HepG2 (cell line): ENCODE measurements at regions of chr2 and their contacts with region 1.

Region 1: DNA sequence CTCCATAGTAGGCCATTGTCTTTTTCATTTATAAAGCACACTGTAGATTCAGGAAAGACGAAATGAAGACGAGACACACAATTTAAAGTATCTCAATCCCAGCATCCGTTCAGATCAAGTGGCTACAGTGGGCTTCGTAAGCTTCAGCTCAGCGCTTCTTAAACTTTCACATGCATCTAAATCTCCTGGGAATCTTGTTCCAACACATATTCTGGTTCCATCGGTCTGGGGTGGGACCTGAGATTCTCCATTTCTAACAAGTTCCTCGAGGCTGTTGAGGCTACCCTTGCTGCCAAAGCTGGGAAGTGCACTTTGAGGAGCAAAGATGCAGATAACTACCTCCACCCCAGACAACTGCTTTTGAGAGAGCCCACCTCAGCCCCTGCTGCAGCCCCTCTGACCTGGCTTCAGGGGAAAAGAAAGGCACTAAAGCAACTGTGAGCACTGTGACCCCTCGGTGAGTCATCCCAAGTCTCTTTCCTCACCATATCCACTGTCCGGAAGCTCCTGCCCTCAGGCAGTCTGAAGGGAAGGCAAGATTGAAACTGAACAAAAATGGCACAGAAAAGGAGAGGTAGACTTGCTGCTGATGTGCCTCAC is 201.1 kb upstream of the FBXO11 start:
- DNase-seq: peak; percentile 39
- ATAC-seq: no peak
- H3K4me3 ChIP-seq: peak overlapping the region in 1 of 3 experiments; percentile 74; a peak in 2 of 6 replicates
- H3K27ac ChIP-seq: no peak overlapping the region
- H3K4me1 ChIP-seq: peaks cover 51% of the 10 kb centered on the region
- H3K27me3 ChIP-seq: peaks cover 0 to 3% of the 10 kb centered on the region in 2 experiments; a peak in 1 of 5 replicates
- CTCF ChIP-seq: no peak
- EP300 ChIP-seq: peak in 1 of 2 experiments; percentile 10; a peak in 1 of 4 replicates
- POLR2A ChIP-seq: no peak
- RAD21 ChIP-seq: no peak

Region 2: GRCh38 chr2:47782671-47783485 is 324.5 kb before region 1 on chr2 and contains the start of gene MSH6:
- CTCF ChIA-PET with region 1: no interaction called
- POLR2A ChIA-PET with region 1: no interaction called
- in situ Hi-C with region 1: no loop called
- intact Hi-C with region 1: loop called (anchors 2 kb)
- DNase-seq: peak; percentile 85
- ATAC-seq: peak; percentile 87
- H3K4me3 ChIP-seq: peak within 1 kb of the TSS; percentile 77 to 85 (median 82)
- H3K27ac ChIP-seq: peak within 1 kb of the TSS; percentile 93
- H3K4me1 ChIP-seq: peaks cover 50% of the 10 kb centered on the region
- H3K27me3 ChIP-seq: peaks cover 0 to 11% of the 10 kb centered on the region in 2 experiments; a peak in 3 of 5 replicates
- CTCF ChIP-seq: no peak; the same call in 1 of the 2 replicates
- EP300 ChIP-seq: no peak
- POLR2A ChIP-seq: peak; percentile 83 to 86
- RAD21 ChIP-seq: peak; percentile 40; the same call in 1 of the 2 replicates
- total RNA-seq, gene MSH6: 113 and 168 TPM in 2 replicates

Region 3: GRCh38 chr2:47964774-47965434 is 142.5 kb before region 1 on chr2:
- CTCF ChIA-PET with region 1: no interaction called
- POLR2A ChIA-PET with region 1: no interaction called
- in situ Hi-C with region 1: no loop called
- intact Hi-C with region 1: no loop called
- DNase-seq: no peak
- ATAC-seq: peak; percentile 53
- H3K4me3 ChIP-seq: no peak overlapping the region
- H3K27ac ChIP-seq: no peak overlapping the region
- H3K4me1 ChIP-seq: peaks cover 11% of the 10 kb centered on the region
- H3K27me3 ChIP-seq: peaks cover 0 to 5% of the 10 kb centered on the region in 2 experiments; a peak in 1 of 5 replicates
- CTCF ChIP-seq: no peak
- EP300 ChIP-seq: no peak
- POLR2A ChIP-seq: no peak
- RAD21 ChIP-seq: no peak

Region 4: GRCh38 chr2:47992671-47993070 is 114.8 kb before region 1 on chr2:
- CTCF ChIA-PET with region 1: no interaction called
- POLR2A ChIA-PET with region 1: no interaction called
- in situ Hi-C with region 1: no loop called
- intact Hi-C with region 1: no loop called
- DNase-seq: no peak
- ATAC-seq: no peak
- H3K4me3 ChIP-seq: no peak overlapping the region
- H3K27ac ChIP-seq: no peak overlapping the region
- H3K4me1 ChIP-seq: peaks cover 9% of the 10 kb centered on the region
- H3K27me3 ChIP-seq: no peaks in the 10 kb centered on the region; a peak in 1 of 5 replicates
- CTCF ChIP-seq: no peak
- EP300 ChIP-seq: no peak
- POLR2A ChIP-seq: no peak
- RAD21 ChIP-seq: no peak

Region 5: DNA sequence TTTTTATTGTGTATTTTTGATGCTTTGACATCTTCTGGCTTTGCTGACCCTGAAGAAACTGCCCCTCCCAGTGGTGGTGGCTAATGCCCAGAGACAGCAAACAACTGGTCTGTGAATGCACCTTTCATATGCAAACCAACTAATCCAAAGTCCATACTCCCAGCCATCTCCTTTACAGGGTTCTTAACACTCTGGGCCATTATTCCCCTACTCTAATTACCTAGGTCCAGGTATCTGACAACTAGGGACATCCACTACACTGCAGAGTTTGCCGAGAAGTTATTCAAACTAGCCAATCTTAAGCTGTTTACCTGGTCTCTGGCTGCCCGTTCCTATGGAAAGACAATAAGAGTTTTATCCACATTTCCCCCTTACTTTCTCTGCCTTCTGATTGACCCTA is 973.3 kb after region 1 on chr2:
- CTCF ChIA-PET with region 1: no interaction called
- POLR2A ChIA-PET with region 1: no interaction called
- in situ Hi-C with region 1: no loop called
- intact Hi-C with region 1: no loop called
- DNase-seq: no peak
- ATAC-seq: no peak
- H3K4me3 ChIP-seq: no peak overlapping the region
- H3K27ac ChIP-seq: no peak overlapping the region
- H3K4me1 ChIP-seq: no peaks in the 10 kb centered on the region
- H3K27me3 ChIP-seq: no peaks in the 10 kb centered on the region
- CTCF ChIP-seq: no peak
- EP300 ChIP-seq: no peak
- POLR2A ChIP-seq: no peak
- RAD21 ChIP-seq: no peak